ENCODE measurements at regions of chr15 and their contacts with region 1.

Region 1: DNA sequence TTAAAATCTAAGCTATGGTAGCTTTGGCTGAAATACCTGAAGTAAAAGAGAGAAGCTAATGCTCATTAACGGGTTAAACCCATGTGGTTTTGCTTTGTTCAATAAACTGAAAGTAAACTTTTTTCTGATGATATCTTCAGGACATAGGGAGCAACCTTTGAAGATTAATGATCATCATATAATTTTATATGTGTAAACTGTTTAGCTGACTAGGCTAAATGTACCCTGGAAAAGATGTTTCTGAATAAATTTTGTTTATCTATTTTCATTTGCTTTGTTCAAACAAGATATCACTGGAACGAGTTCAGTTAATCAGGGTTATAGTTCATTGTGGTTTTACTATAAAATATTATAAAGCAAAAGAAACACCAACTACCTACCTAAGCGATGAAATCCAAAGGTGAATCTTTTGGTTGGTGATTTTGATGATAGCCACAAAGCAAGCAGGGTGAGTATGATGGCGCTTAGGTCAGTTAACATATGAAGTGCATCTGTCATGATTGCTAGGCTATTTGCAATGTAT is 11.7 kb downstream of the SLC30A4 start:
- DNase-seq: no peak

Region 2: DNA sequence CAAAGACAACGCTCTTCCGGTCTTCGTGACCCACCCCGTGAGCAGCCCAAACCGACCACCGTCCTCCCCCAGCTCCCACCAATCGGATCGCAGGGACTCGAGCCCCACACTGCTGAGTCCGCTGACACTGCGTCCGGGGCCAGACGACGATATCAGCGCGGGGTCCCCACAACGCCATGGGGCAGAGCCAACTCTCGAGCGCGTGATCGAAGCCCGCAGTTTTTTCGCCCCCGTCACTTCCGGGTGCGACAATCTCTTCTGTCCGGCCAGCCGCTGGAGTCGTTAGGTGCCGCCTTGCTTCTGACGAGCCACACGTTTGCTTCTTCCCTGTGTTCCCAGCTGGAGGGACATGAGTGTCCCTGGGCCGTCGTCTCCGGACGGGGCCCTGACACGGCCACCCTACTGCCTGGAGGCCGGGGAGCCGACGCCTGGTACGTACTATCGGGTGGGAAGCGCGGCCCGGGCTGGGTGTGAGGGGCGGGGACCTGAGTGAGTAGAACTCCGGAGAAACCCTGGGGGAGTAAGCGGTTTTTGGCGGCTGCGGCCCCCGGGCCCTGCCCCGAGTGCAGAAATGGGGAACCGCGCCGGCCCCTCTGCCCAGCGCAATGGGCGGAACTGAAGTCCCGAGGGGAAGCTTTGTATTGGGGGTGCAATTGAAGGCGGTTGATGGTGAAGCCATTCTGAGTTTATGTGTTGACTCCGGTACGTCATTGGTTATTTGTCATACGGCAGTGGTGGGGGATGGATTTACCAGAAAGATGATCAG is 76.5 kb after region 1 on chr15 and contains the start of gene BLOC1S6:
- in situ Hi-C with region 1: loop called (anchors 10 kb)
- DNase-seq: peak; percentile 91
- total RNA-seq, gene BLOC1S6: 53.4 and 114 TPM in 2 replicates

Region 3: DNA sequence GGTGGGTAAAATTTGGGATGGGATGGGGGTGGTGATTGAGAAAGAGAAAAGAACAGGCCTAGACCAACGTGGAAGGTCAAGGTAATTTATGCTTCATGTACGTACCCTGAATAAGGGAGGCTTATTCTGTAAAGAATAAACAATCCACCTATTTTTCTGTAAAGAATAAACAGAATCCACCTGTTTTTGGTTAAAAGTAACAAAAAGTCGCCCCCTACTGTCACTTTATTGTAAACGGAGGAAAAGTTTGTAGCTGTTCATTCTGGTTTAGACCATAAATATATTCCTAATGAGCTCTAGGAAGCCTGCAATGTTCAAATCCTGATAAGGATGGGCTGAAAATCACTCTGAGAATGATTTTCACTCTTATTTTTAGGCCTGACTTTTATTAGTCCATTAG is 100.5 kb after region 1 on chr15:
- in situ Hi-C with region 1: no loop called
- DNase-seq: peak; percentile 14

Measured in G401 (cell line).